ENCODE measurements at regions of chr5 and their contacts with region 1.

Region 1: DNA sequence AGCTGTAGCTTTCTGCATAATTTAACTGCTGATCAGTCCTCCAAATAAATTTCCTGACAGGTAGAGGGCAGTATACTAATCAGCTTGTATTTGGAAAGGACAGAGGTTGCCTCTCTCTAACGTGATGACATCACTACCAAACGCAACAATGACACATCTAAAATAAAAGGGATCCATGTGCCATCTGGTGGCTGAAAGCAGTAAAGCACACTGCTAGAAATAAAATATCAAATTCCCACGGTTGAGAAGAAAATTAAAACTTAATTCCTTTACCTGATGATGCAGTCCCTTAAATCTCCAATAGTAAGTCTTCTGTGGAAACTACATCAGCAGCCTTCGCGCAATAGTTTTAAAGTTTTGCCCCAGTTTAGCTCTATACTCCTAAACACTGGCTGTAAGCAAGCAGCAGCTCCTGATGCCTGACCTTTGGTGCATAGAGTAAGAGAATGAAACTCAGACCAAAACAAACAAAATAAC is 54.5 kb downstream of the DIAPH1 start:
- DNase-seq: peak; percentile 73 to 91 (median 76)
- ATAC-seq: peak; percentile 92
- H3K4me3 ChIP-seq: no peak overlapping the region
- H3K27ac ChIP-seq: peak overlapping the region; percentile 80
- H3K4me1 ChIP-seq: 0 out of 5 replicates have a peak, but pooled peaks cover 0 to 4% of the 10 kb centered on the region in 2 experiments
- H3K27me3 ChIP-seq: no peaks in the 10 kb centered on the region
- CTCF ChIP-seq: peak; percentile 92 to 98 (median 95)
- EP300 ChIP-seq: peak; percentile 87
- POLR2A ChIP-seq: no peak
- RAD21 ChIP-seq: peak; percentile 75 to 83

Region 2: DNA sequence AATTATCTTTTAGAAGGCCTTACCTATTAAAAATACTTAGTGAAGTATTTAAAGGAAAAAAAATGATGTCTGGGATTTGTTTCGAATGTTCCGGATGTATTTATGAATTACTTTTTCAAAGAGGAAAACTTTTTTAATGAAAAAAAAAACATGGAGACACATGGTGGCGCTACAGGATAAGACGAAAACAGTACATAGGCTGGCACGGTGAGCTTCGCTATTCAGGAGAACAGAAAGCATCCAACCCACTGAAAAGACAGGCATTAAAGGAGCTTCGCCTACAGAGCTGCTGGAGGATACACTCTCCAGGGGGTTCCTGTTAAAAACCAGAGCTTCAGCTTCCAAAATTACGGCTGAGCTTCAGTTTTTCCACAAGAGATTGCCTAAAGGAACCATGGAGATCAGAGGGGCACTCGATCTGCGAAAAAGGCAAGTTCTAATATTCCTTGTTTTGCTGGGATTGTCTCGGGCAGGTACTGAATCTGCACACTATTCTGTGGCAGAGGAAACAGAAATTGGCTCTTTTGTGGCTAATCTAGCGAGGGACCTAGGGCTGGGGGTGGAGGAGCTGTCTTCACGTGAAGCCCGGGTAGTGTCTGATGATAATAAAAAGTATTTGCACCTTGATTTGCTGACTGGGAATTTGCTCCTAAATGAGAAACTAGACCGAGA is 341.0 kb before region 1 on chr5 and contains the start of gene PCDHB14:
- CTCF ChIA-PET with region 1: interaction called, 6 read pairs
- POLR2A ChIA-PET with region 1: interaction called, 3 read pairs
- in situ Hi-C with region 1: no loop called
- intact Hi-C with region 1: loop called (anchors 1 kb)
- DNase-seq: peak in 3 of 4 experiments; percentile 8 to 30 (median 18)
- ATAC-seq: peak; percentile 77
- H3K4me3 ChIP-seq: no peak within 1 kb of the TSS
- H3K27ac ChIP-seq: no peak within 1 kb of the TSS
- H3K4me1 ChIP-seq: no peaks in the 10 kb centered on the region
- H3K27me3 ChIP-seq: peaks cover 0 to 6% of the 10 kb centered on the region in 2 experiments; a peak in 2 of 5 replicates
- CTCF ChIP-seq: peak; percentile 34 to 64 (median 52); a peak in 5 of 6 replicates
- EP300 ChIP-seq: no peak
- POLR2A ChIP-seq: no peak
- RAD21 ChIP-seq: no peak; a peak in 1 of 4 replicates
- polyA plus RNA-seq, gene PCDHB14: not detected

Region 3: GRCh38 chr5:141245250-141245717 is 319.0 kb before region 1 on chr5 and contains the start of gene PCDHB15:
- CTCF ChIA-PET with region 1: interaction called, 3 read pairs
- POLR2A ChIA-PET with region 1: no interaction called
- in situ Hi-C with region 1: no loop called
- intact Hi-C with region 1: loop called (anchors 2 kb)
- DNase-seq: peak; percentile 11 to 44 (median 17)
- ATAC-seq: peak; percentile 58
- H3K4me3 ChIP-seq: peak within 1 kb of the TSS; percentile 14; the same call in 1 of the 2 replicates
- H3K27ac ChIP-seq: no peak within 1 kb of the TSS
- H3K4me1 ChIP-seq: peaks cover 0 to 10% of the 10 kb centered on the region in 2 experiments; a peak in 1 of 5 replicates
- H3K27me3 ChIP-seq: peaks cover 0 to 16% of the 10 kb centered on the region in 2 experiments; a peak in 2 of 5 replicates
- CTCF ChIP-seq: peak; percentile 38 to 67 (median 63); a peak in 5 of 6 replicates
- EP300 ChIP-seq: no peak
- POLR2A ChIP-seq: no peak
- RAD21 ChIP-seq: peak; percentile 40 to 57; a peak in 3 of 4 replicates
- polyA plus RNA-seq, gene PCDHB15: not detected

Region 4: GRCh38 chr5:141359790-141360426 is 204.3 kb before region 1 on chr5 and contains the start of gene PCDHGB2:
- CTCF ChIA-PET with region 1: interaction called, 12 read pairs
- POLR2A ChIA-PET with region 1: no interaction called
- in situ Hi-C with region 1: no loop called
- intact Hi-C with region 1: no loop called
- DNase-seq: peak in 2 of 4 experiments; percentile 40 to 56
- ATAC-seq: peak; percentile 76
- H3K4me3 ChIP-seq: peak within 1 kb of the TSS; percentile 33
- H3K27ac ChIP-seq: no peak within 1 kb of the TSS
- H3K4me1 ChIP-seq: peaks cover 3 to 17% of the 10 kb centered on the region in 2 experiments; a peak in 3 of 5 replicates
- H3K27me3 ChIP-seq: peaks cover 0 to 28% of the 10 kb centered on the region in 2 experiments; a peak in 3 of 5 replicates
- CTCF ChIP-seq: peak; percentile 58 to 70 (median 68)
- EP300 ChIP-seq: no peak
- POLR2A ChIP-seq: no peak
- RAD21 ChIP-seq: peak; percentile 12 to 35; a peak in 2 of 4 replicates
- polyA plus RNA-seq, gene PCDHGB2: 0.06 TPM in 1 of 2 experiments, not detected in the other

Region 5: GRCh38 chr5:141420855-141421496 is 143.3 kb before region 1 on chr5 and contains the start of gene PCDHGA11:
- CTCF ChIA-PET with region 1: interaction called, 3 read pairs
- POLR2A ChIA-PET with region 1: no interaction called
- in situ Hi-C with region 1: loop called (anchors 5 kb)
- intact Hi-C with region 1: loop called (anchors 2 kb)
- DNase-seq: peak; percentile 57 to 61 (median 59)
- ATAC-seq: peak; percentile 83
- H3K4me3 ChIP-seq: peak within 1 kb of the TSS; percentile 17; the same call in 1 of the 2 replicates
- H3K27ac ChIP-seq: no peak within 1 kb of the TSS
- H3K4me1 ChIP-seq: peaks cover 0 to 23% of the 10 kb centered on the region in 2 experiments; a peak in 2 of 5 replicates
- H3K27me3 ChIP-seq: peaks cover 0 to 37% of the 10 kb centered on the region in 2 experiments; a peak in 3 of 5 replicates
- CTCF ChIP-seq: peak; percentile 63 to 80 (median 74)
- EP300 ChIP-seq: no peak
- POLR2A ChIP-seq: no peak
- RAD21 ChIP-seq: peak; percentile 42 to 69
- polyA plus RNA-seq, gene PCDHGA11: not detected

Measured in K562 (cell line).